Mucosa of descending colon (tissue), 3 donors: ENCODE measurements at regions of chr10 and their contacts with region 1.

Region 1: GRCh38 chr10:26881600-26882331 is 21.0 kb upstream of the ABI1 start:
- DNase-seq: no peak
- ATAC-seq: peak; percentile 72
- H3K4me3 ChIP-seq: no peak overlapping the region
- H3K4me1 ChIP-seq: no peaks in the 10 kb centered on the region
- CTCF ChIP-seq: peak; percentile 25

Region 2: GRCh38 chr10:26725837-26726727 is 155.7 kb before region 1 on chr10:
- intact Hi-C with region 1: loop called (anchors 5 kb)
- DNase-seq: peak in 1 of 3 donors; percentile 60
- ATAC-seq: peak; percentile 85
- H3K4me3 ChIP-seq: no peak overlapping the region
- H3K4me1 ChIP-seq: peaks cover 4% of the 10 kb centered on the region
- CTCF ChIP-seq: peak; percentile 41